CD8-positive, alpha-beta T cell (primary cell): ENCODE measurements at regions of chr15 and their contacts with region 1.

Region 1: DNA sequence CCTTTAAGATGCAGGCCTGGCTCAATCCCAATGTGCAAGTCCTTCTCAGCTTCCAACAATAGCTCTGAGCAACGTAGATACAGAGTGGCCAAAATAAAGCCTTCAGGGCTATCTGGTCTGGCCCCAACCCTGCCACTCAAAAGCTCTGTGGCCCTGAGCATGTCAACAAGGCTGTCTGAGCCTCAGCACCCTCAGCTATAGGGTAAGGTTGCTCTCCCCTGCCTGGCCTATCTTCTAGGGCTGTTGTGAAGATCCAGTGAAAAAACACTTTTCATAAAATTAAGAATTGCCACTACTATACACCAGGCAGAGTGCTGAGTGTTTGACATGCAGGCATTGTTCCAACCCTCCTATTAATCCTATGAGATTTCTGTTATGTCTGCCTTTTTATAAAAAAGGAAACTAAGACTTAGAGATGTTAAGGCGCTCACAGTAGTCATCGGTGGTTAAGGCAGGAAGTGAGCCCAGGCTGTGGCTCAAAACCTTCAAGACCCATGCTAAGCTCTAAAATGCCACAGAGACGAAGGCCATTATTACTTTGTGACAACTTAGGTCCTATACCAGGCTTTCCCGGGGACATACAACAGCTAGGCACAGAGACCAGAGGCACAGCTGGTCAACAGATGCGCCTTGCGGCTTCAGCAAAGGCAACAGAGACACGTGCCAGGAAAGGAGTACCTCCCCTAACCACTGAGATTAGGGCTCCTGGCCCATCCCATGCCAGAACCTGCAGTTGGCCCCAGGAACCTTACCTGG is 5.1 kb downstream of the POLG start:
- DNase-seq: peak in 8 of 9 experiments; percentile 24 to 71 (median 42)
- ATAC-seq: peak; percentile 29
- H3K4me3 ChIP-seq: peak overlapping the region in 1 of 2 experiments; percentile 10
- H3K4me3 Mint-ChIP-seq: peak overlapping the region; percentile 35
- H3K27ac ChIP-seq: peak overlapping the region in 1 of 2 experiments; percentile 71
- H3K27ac Mint-ChIP-seq: peak overlapping the region; percentile 34
- H3K4me1 ChIP-seq: peaks cover 61% of the 10 kb centered on the region
- H3K4me1 Mint-ChIP-seq: peaks cover 52% of the 10 kb centered on the region
- H3K27me3 ChIP-seq: no peaks in the 10 kb centered on the region
- H3K27me3 Mint-ChIP-seq: no peaks in the 10 kb centered on the region
- CTCF ChIP-seq: no peak

Region 2: GRCh38 chr15:89299896-89300295 is 29.6 kb before region 1 on chr15:
- CTCF ChIA-PET with region 1: no interaction called
- POLR2A ChIA-PET with region 1: no interaction called
- intact Hi-C with region 1: loop called in 1 of 2 experiments (anchors 1 kb)
- DNase-seq: no peak
- ATAC-seq: no peak
- H3K4me3 ChIP-seq: no peak overlapping the region
- H3K4me3 Mint-ChIP-seq: no peak overlapping the region
- H3K27ac ChIP-seq: no peak overlapping the region
- H3K27ac Mint-ChIP-seq: no peak overlapping the region
- H3K4me1 ChIP-seq: no peaks in the 10 kb centered on the region
- H3K4me1 Mint-ChIP-seq: no peaks in the 10 kb centered on the region
- H3K27me3 ChIP-seq: no peaks in the 10 kb centered on the region
- H3K27me3 Mint-ChIP-seq: no peaks in the 10 kb centered on the region
- CTCF ChIP-seq: no peak

Region 3: DNA sequence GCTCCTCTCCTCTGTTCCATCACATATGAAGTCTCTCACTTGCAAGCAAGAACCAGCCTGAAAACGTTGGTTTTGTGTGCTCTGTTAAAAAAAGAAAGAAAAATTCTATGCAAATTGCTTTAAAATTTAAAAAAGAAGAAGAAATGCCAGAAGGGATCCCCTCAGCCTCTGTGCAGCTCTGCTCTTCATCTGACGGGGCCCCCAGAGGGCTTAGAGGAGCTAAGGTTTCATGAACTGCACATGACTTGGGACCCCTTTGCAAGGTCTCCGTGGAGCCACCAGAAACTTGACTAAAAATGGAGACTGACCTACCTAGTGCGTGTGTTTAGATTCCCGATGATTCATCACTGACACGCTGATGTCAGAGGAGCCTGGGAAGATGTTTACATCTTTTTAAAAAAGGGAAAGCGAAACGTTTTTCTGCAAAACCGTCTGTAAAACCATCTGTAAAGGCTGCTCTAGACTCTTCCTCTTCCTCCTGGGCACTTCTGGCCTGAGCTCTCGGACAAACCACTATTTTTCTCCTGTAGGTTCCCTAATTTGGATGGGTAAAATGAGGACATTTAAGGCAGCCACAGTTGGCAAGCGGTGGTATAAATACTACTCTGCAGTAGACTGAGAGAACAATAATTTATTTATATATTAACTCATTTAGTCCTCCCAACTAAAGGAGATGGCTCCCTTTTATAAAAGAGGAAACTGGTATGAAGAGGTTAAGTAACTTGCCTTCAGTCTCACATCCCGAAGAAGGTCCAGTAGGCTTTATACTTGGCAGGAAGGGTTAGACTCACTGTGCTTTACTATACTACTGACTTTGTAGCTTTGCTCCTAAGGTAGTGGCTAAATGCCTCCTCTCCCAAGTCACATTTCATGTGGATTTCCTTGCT is 72.4 kb after region 1 on chr15:
- CTCF ChIA-PET with region 1: no interaction called
- POLR2A ChIA-PET with region 1: no interaction called
- intact Hi-C with region 1: no loop called
- DNase-seq: no peak
- ATAC-seq: no peak
- H3K4me3 ChIP-seq: no peak overlapping the region
- H3K4me3 Mint-ChIP-seq: no peak overlapping the region
- H3K27ac ChIP-seq: no peak overlapping the region
- H3K27ac Mint-ChIP-seq: no peak overlapping the region
- H3K4me1 ChIP-seq: peaks cover 23% of the 10 kb centered on the region
- H3K4me1 Mint-ChIP-seq: peaks cover 21% of the 10 kb centered on the region
- H3K27me3 ChIP-seq: peaks cover 13 to 41% of the 10 kb centered on the region in 2 experiments
- H3K27me3 Mint-ChIP-seq: peaks cover 72% of the 10 kb centered on the region
- CTCF ChIP-seq: no peak